Naive thymus-derived CD4-positive, alpha-beta T cell (primary cell): ENCODE measurements at regions of chr6 and their contacts with region 1.

Region 1: GRCh38 chr6:63721181-63721580 is 85.6 kb downstream of the PHF3 start:
- DNase-seq: no peak
- ATAC-seq: no peak
- H3K4me3 ChIP-seq: no peak overlapping the region
- H3K4me3 Mint-ChIP-seq: no peak overlapping the region
- H3K27ac ChIP-seq: no peak overlapping the region
- H3K27ac Mint-ChIP-seq: peak overlapping the region in 2 of 9 donors; percentile 6 to 38
- H3K4me1 ChIP-seq: no peaks in the 10 kb centered on the region
- H3K4me1 Mint-ChIP-seq: peaks cover 0 to 28% (median 8%) of the 10 kb centered on the region in 7 donors
- H3K27me3 ChIP-seq: no peaks in the 10 kb centered on the region
- H3K27me3 Mint-ChIP-seq: no peaks in the 10 kb centered on the region

Region 2: GRCh38 chr6:63734923-63735322 is 13.7 kb after region 1 on chr6:
- CTCF ChIA-PET with region 1: no interaction called
- POLR2A ChIA-PET with region 1: no interaction called
- intact Hi-C with region 1: loop called in 1 of 2 experiments (anchors 2 kb)
- DNase-seq: no peak
- ATAC-seq: no peak
- H3K4me3 ChIP-seq: no peak overlapping the region
- H3K4me3 Mint-ChIP-seq: no peak overlapping the region
- H3K27ac ChIP-seq: no peak overlapping the region
- H3K27ac Mint-ChIP-seq: no peak overlapping the region
- H3K4me1 ChIP-seq: no peaks in the 10 kb centered on the region
- H3K4me1 Mint-ChIP-seq: peaks cover 0 to 4% (median 0%) of the 10 kb centered on the region in 7 donors
- H3K27me3 ChIP-seq: no peaks in the 10 kb centered on the region
- H3K27me3 Mint-ChIP-seq: no peaks in the 10 kb centered on the region